ENCODE measurements at regions of chr17 and their contacts with region 1.

Region 1: DNA sequence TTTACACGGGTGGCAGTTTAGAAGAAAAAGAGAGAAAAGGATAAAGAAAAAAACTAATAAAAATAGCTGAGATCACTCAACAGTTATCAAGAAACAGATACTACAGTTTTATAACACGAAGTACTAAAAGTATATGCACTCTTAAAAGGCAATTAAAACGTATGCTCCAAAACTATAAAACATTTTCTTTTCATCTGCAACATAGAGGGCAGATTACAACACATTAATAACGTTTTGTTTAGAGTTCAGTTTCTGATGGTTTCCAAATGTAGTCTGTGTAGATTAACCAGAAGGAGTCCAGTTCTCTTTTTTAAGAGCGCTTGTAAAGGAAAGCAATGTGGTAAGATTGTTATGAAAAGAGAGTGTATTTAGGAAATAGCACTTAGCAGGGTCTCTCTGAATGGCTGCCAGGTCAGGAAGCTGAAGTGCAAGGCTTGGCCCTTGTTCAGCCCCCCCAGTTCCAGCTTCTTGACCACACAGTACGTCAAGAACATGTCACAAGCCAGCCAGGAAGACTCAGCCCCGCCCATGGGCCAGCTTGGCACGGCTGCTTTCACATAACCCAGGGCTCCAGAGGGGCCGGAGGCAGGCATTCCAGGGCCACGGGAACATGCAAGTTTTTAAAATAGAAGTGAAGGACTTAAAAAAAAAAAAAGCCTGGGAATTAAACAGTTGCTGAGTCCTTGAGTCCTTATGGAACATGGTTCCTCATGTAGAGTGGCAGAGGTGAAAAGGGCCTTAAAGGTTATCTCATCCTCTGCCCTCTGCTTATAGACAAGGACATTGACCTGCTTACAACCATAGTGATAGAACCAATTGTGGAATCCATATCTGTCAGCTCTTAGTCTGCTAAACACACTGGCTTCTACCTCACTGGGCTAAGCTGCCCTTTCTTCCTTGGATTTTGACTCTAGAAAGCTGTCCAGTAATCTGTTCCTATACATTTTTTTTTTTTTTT is 147.4 kb upstream of the TBX2 start:
- DNase-seq: peak; percentile 88 to 92
- ATAC-seq: peak; percentile 92 to 96 (median 95)
- H3K4me3 ChIP-seq: peak overlapping the region in 1 of 10 donors; percentile 2
- H3K27ac ChIP-seq: peak overlapping the region; percentile 34 to 86 (median 72)
- H3K4me1 ChIP-seq: peaks cover 5 to 69% (median 46%) of the 10 kb centered on the region in 9 donors
- H3K27me3 ChIP-seq: no peaks in the 10 kb centered on the region
- CTCF ChIP-seq: no peak

Region 2: GRCh38 chr17:61208301-61209105 is 43.7 kb before region 1 on chr17:
- intact Hi-C with region 1: loop called in 2 of 10 experiments (anchors 5 to 10 kb)
- DNase-seq: no peak
- ATAC-seq: peak in 7 of 8 donors; percentile 45 to 81 (median 59)
- H3K4me3 ChIP-seq: peak overlapping the region in 5 of 10 donors; percentile 5 to 19 (median 10)
- H3K27ac ChIP-seq: peak overlapping the region; percentile 37 to 79 (median 62)
- H3K4me1 ChIP-seq: peaks cover 0 to 31% (median 17%) of the 10 kb centered on the region in 9 donors
- H3K27me3 ChIP-seq: no peaks in the 10 kb centered on the region
- CTCF ChIP-seq: no peak

Region 3: GRCh38 chr17:61307905-61308886 is 56.0 kb after region 1 on chr17:
- intact Hi-C with region 1: no loop called
- DNase-seq: no peak
- ATAC-seq: peak in 2 of 8 donors; percentile 47 to 56
- H3K4me3 ChIP-seq: no peak overlapping the region
- H3K27ac ChIP-seq: peak overlapping the region in 3 of 10 donors; percentile 4 to 41 (median 28)
- H3K4me1 ChIP-seq: peaks cover 0 to 10% (median 5%) of the 10 kb centered on the region in 9 donors
- H3K27me3 ChIP-seq: no peaks in the 10 kb centered on the region
- CTCF ChIP-seq: no peak

Region 4: DNA sequence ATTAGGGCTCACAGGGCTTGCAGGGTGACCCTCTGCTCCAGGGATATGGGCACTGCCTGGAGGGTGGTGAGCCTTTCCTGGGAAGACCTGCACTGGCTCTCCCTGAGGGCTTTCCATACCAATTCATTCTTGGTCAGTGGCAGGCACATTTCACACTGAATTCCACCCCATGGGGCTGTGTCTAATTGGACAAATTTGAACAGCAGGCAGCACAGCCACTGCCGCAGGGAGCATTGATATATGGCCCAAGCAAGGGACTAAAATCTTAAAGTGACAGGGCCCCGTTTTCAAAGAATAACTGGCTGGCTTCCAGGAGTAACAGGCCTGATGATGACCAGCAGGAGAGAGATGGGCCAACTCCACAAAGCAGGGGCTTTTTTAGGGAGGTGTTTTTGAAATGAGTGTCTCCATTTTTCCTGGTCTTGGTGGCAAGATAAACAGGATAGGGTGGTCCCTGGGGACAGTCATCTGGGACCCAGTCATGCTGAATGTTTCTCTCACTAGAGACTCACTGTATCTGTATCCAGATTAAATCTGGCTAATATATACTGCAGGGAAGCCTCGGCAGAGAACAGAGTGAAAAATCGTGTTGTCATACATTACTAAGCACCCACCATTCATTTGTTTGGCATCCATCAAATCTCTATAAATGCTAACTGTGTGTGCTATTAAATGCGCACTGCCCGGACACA is 73.3 kb after region 1 on chr17:
- intact Hi-C with region 1: loop called in 1 of 10 experiments (anchors 10 kb)
- DNase-seq: no peak
- ATAC-seq: peak in 2 of 8 donors; percentile 29 to 46
- H3K4me3 ChIP-seq: no peak overlapping the region
- H3K27ac ChIP-seq: peak overlapping the region in 7 of 10 donors; percentile 12 to 79 (median 57)
- H3K4me1 ChIP-seq: peaks cover 2 to 39% (median 25%) of the 10 kb centered on the region in 9 donors
- H3K27me3 ChIP-seq: no peaks in the 10 kb centered on the region
- CTCF ChIP-seq: no peak

Region 5: DNA sequence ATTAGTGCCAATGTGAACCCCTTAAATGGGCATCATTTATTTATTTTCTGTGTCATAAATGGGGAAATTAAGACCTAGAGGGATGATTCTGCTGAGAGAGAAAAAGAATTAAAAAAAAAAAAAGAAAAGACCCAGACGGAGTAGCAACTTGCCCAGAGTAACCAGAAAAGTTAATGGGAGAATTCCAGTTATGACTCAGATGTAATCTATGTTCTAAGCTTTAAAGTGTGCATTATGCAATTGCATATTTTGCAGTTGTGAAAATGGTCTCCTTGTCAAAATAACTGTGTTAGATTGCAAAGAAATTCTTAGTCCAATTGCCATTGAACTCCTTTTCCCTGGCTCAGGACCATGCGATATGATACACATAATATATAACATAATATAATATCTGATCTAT is 108.9 kb after region 1 on chr17:
- intact Hi-C with region 1: no loop called
- DNase-seq: no peak
- ATAC-seq: no peak
- H3K4me3 ChIP-seq: no peak overlapping the region
- H3K27ac ChIP-seq: no peak overlapping the region
- H3K4me1 ChIP-seq: peaks cover 0 to 6% (median 0%) of the 10 kb centered on the region in 9 donors
- H3K27me3 ChIP-seq: peaks cover 0 to 21% (median 0%) of the 10 kb centered on the region in 7 donors
- CTCF ChIP-seq: no peak

Region 6: GRCh38 chr17:61389670-61390478 is 137.7 kb after region 1 on chr17:
- intact Hi-C with region 1: loop called in 5 of 10 experiments (anchors 5 to 10 kb)
- DNase-seq: peak in 1 of 2 donors; percentile 68
- ATAC-seq: peak; percentile 57 to 81 (median 73)
- H3K4me3 ChIP-seq: peak overlapping the region in 2 of 10 donors; percentile 1 to 20
- H3K27ac ChIP-seq: peak overlapping the region in 9 of 10 donors; percentile 19 to 72 (median 60)
- H3K4me1 ChIP-seq: peaks cover 0 to 24% (median 8%) of the 10 kb centered on the region in 9 donors
- H3K27me3 ChIP-seq: peaks cover 0 to 12% (median 0%) of the 10 kb centered on the region in 7 donors
- CTCF ChIP-seq: peak; percentile 66 to 92 (median 90)

Measured in heart right ventricle (tissue), 16 donors.